Activated naive CD4-positive, alpha-beta T cell treated with anti-CD3 and anti-CD28 coated beads for 36 hours (primary cell): ENCODE measurements at regions of chr19 and their contacts with region 1.

Region 1: GRCh38 chr19:13162518-13163314 is 12.5 kb downstream of the IER2 start:
- DNase-seq: peak; percentile 98
- H3K4me3 Mint-ChIP-seq: peak overlapping the region; percentile 79
- H3K27ac Mint-ChIP-seq: peak overlapping the region; percentile 97
- H3K4me1 Mint-ChIP-seq: peaks cover 65% of the 10 kb centered on the region
- H3K27me3 Mint-ChIP-seq: no peaks in the 10 kb centered on the region

Region 2: GRCh38 chr19:13117772-13118423 is 44.8 kb before region 1 on chr19 and contains the start of gene NACC1:
- CTCF ChIA-PET with region 1: no interaction called
- intact Hi-C with region 1: loop called (anchors 1 kb)
- DNase-seq: peak; percentile 89
- H3K4me3 Mint-ChIP-seq: peak within 1 kb of the TSS; percentile 97
- H3K27ac Mint-ChIP-seq: peak within 1 kb of the TSS; percentile 91
- H3K4me1 Mint-ChIP-seq: peaks cover 49% of the 10 kb centered on the region
- H3K27me3 Mint-ChIP-seq: no peaks in the 10 kb centered on the region
- total RNA-seq, gene NACC1: 41.3 to 45.0 TPM

Region 3: GRCh38 chr19:13839130-13839937 is 676.6 kb after region 1 on chr19:
- CTCF ChIA-PET with region 1: no interaction called
- intact Hi-C with region 1: loop called (anchors 5 kb)
- DNase-seq: peak; percentile 95
- H3K4me3 Mint-ChIP-seq: peak overlapping the region; percentile 93
- H3K27ac Mint-ChIP-seq: peak overlapping the region; percentile 99
- H3K4me1 Mint-ChIP-seq: peaks cover 47% of the 10 kb centered on the region
- H3K27me3 Mint-ChIP-seq: no peaks in the 10 kb centered on the region